CD8-positive, alpha-beta T cell (primary cell): ENCODE measurements at regions of chr1 and their contacts with region 1.

Region 1: GRCh38 chr1:54800899-54801759 is at the start of gene TTC22:
- DNase-seq: peak; percentile 39 to 84 (median 72)
- ATAC-seq: peak; percentile 81
- H3K4me3 ChIP-seq: peak within 1 kb of the TSS; percentile 59 to 79
- H3K4me3 Mint-ChIP-seq: peak within 1 kb of the TSS; percentile 97
- H3K27ac ChIP-seq: peak within 1 kb of the TSS; percentile 38 to 74
- H3K27ac Mint-ChIP-seq: peak within 1 kb of the TSS; percentile 93
- H3K4me1 ChIP-seq: peaks cover 37% of the 10 kb centered on the region
- H3K4me1 Mint-ChIP-seq: peaks cover 58% of the 10 kb centered on the region
- H3K27me3 ChIP-seq: no peaks in the 10 kb centered on the region
- H3K27me3 Mint-ChIP-seq: no peaks in the 10 kb centered on the region
- CTCF ChIP-seq: peak; percentile 54
- total RNA-seq, gene TTC22: 3.1 to 4.2 TPM

Region 2: GRCh38 chr1:54774820-54775498 is 26.2 kb before region 1 on chr1:
- CTCF ChIA-PET with region 1: interaction called, 10 read pairs
- POLR2A ChIA-PET with region 1: no interaction called
- intact Hi-C with region 1: no loop called
- DNase-seq: peak in 1 of 9 experiments; percentile 27
- ATAC-seq: no peak
- H3K4me3 ChIP-seq: no peak overlapping the region
- H3K4me3 Mint-ChIP-seq: no peak overlapping the region
- H3K27ac ChIP-seq: no peak overlapping the region
- H3K27ac Mint-ChIP-seq: no peak overlapping the region
- H3K4me1 ChIP-seq: no peaks in the 10 kb centered on the region
- H3K4me1 Mint-ChIP-seq: no peaks in the 10 kb centered on the region
- H3K27me3 ChIP-seq: no peaks in the 10 kb centered on the region
- H3K27me3 Mint-ChIP-seq: no peaks in the 10 kb centered on the region
- CTCF ChIP-seq: no peak

Region 3: DNA sequence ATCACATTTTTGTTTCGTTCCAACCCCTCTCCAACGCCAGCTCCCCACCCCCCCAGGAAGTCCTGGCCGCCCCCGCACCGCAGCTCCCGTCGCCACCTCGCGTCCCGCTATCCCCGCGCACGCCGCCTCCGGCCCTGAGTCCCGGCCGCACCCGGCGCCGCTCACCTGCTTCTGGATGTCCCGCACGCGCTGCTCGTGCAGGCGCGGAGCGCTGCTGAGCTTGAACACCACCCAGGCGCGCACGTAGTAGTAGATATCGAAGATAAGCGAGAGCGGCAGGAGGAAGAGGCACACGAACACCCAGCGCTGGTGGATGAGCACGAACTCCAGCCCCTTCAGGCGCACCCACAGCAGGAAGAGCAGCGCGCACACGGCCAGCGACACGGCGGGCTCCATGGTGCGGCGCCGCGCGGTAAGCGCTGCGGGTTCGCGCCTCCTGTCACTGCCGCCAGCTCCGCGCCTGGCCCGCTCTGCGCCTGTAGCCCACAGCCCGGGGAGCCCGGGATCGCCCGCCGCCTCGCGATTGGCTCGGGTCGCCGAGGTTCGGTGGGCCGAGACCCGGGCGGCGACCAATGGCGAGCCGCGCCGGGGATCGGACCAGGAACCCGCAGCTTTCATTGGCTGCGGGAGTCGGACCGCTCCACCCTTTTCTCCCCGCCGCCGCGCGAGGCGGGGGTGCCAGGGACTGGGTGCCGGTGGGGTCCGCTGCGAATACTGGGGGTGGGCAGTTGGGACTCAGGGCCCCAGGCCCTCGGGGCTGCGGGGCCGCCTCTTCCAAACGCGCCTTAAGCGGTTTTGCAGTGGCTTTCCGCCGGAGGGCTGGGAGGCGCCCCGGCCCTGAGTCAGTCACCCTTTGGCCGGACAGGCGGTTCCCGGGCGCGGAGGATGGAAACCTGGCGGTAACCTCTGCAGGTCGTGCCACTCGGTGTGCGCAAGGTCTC is 85.9 kb after region 1 on chr1 and contains the start of gene DHCR24:
- CTCF ChIA-PET with region 1: no interaction called
- POLR2A ChIA-PET with region 1: no interaction called
- intact Hi-C with region 1: loop called in 1 of 2 experiments (anchors 5 kb)
- DNase-seq: peak; percentile 25 to 83 (median 61)
- ATAC-seq: peak; percentile 84
- H3K4me3 ChIP-seq: peak within 1 kb of the TSS; percentile 55 to 62
- H3K4me3 Mint-ChIP-seq: peak within 1 kb of the TSS; percentile 96
- H3K27ac ChIP-seq: peak within 1 kb of the TSS in 1 of 2 experiments; percentile 11
- H3K27ac Mint-ChIP-seq: peak within 1 kb of the TSS; percentile 76
- H3K4me1 ChIP-seq: peaks cover 11% of the 10 kb centered on the region
- H3K4me1 Mint-ChIP-seq: peaks cover 29% of the 10 kb centered on the region
- H3K27me3 ChIP-seq: peaks cover 0 to 3% of the 10 kb centered on the region in 2 experiments
- H3K27me3 Mint-ChIP-seq: peaks cover 2% of the 10 kb centered on the region
- CTCF ChIP-seq: no peak
- total RNA-seq, gene DHCR24: 1.6 to 1.9 TPM